Cardiac septum (tissue), 1 donor: ENCODE measurements at regions of chr12 and their contacts with region 1.

Region 1: DNA sequence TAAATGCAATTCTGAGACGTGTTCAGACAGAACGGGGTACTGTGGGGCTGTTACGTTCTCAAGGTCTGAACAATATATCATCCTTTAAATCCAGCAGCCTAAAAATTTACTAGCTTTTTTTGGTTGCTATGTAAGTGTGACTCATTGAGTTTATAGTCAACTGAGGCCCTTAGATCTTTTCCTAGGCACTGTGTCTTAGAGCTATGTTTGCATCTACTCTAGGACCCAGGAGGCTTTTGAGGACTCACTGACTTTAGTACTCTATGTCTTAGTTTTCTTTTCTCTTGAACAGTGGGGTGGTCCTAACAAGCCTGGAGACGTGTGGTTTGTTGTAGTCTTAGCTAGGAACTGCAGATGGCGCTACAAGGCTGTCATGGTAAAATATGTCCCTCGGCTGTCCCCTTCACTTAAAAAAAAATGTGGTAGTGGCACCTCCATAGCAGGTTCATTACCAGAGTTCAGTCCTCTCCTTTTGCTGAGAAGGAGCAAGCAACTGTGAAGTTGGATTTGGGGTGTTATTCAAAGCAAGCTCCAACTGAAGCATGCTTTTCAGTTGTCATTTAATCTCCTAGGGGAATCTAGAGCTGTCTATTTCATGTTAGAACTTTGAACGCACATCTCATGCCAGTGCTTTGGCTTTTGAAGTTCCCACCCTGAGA is 8.7 kb upstream of the SPATS2 start:
- DNase-seq: no peak

Region 2: DNA sequence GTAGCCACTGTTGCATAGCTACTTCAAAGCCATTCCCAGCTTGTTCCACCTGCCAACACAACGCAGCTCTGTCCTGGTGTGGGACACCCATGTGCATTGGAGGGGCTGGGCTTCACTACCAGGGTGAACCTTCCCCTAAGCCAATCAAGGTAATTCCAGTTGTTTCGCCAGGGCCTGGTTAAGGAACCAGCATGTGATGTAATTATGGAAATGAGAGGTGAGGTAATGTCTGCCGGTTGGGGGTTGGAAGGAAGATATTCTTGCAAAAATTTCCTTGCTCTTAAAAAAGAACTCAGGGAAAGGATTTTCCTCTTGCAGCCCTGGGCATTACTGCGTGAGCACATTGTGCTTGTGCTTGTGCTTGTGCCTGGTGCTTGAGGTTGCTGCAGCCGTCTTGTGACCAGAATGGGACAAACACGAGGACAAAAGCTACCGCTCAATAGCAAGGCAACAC is 78.9 kb before region 1 on chr12:
- intact Hi-C with region 1: no loop called
- DNase-seq: no peak

Region 3: DNA sequence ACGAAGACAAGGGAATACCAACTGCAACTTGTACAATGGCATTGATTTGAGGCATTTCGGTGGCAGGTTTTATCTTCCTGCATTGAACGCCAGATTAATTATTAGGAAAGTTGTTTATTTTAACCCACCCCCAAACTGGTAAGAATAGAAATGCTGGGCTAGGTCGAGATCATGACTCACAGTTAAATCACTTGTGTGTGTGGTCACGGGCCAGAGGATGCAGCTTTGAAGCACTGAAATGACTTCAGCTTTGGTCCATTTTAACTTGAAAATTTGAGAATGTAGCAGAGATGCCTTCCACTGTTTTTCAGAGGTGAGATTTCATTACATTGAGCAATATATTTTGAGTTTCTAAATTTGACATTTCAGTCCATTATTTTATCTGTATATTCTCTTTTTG is 156.7 kb after region 1 on chr12:
- intact Hi-C with region 1: loop called (anchors 1 kb)
- DNase-seq: no peak